Naive thymus-derived CD4-positive, alpha-beta T cell (primary cell): ENCODE measurements at regions of chr6 and their contacts with region 1.

Region 1: GRCh38 chr6:135002229-135002844 is 52.3 kb downstream of the HBS1L start:
- DNase-seq: peak in 4 of 9 donors; percentile 18 to 28 (median 24)
- ATAC-seq: peak; percentile 54
- H3K4me3 ChIP-seq: no peak overlapping the region
- H3K4me3 Mint-ChIP-seq: no peak overlapping the region
- H3K27ac ChIP-seq: no peak overlapping the region
- H3K27ac Mint-ChIP-seq: no peak overlapping the region
- H3K4me1 ChIP-seq: peaks cover 0 to 8% of the 10 kb centered on the region in 2 donors
- H3K4me1 Mint-ChIP-seq: peaks cover under 1 to 19% (median 15%) of the 10 kb centered on the region in 7 donors
- H3K27me3 ChIP-seq: no peaks in the 10 kb centered on the region
- H3K27me3 Mint-ChIP-seq: no peaks in the 10 kb centered on the region

Region 2: GRCh38 chr6:134196568-134197193 is 805.7 kb before region 1 on chr6:
- CTCF ChIA-PET with region 1: no interaction called
- POLR2A ChIA-PET with region 1: no interaction called
- intact Hi-C with region 1: no loop called
- DNase-seq: no peak
- ATAC-seq: peak; percentile 53
- H3K4me3 ChIP-seq: no peak overlapping the region
- H3K4me3 Mint-ChIP-seq: no peak overlapping the region
- H3K27ac ChIP-seq: no peak overlapping the region
- H3K27ac Mint-ChIP-seq: peak overlapping the region in 2 of 9 donors; percentile 34 to 74
- H3K4me1 ChIP-seq: no peaks in the 10 kb centered on the region
- H3K4me1 Mint-ChIP-seq: peaks cover 6 to 37% (median 11%) of the 10 kb centered on the region in 7 donors
- H3K27me3 ChIP-seq: no peaks in the 10 kb centered on the region
- H3K27me3 Mint-ChIP-seq: no peaks in the 10 kb centered on the region

Region 3: GRCh38 chr6:134984821-134985220 is 17.5 kb before region 1 on chr6:
- CTCF ChIA-PET with region 1: interaction called, 4 read pairs
- POLR2A ChIA-PET with region 1: no interaction called
- intact Hi-C with region 1: loop called in 1 of 2 experiments (anchors 2 kb)
- DNase-seq: no peak
- ATAC-seq: no peak
- H3K4me3 ChIP-seq: no peak overlapping the region
- H3K4me3 Mint-ChIP-seq: no peak overlapping the region
- H3K27ac ChIP-seq: no peak overlapping the region
- H3K27ac Mint-ChIP-seq: peak overlapping the region in 2 of 9 donors; percentile 7 to 14
- H3K4me1 ChIP-seq: no peaks in the 10 kb centered on the region
- H3K4me1 Mint-ChIP-seq: peaks cover 3 to 41% (median 13%) of the 10 kb centered on the region in 7 donors
- H3K27me3 ChIP-seq: no peaks in the 10 kb centered on the region
- H3K27me3 Mint-ChIP-seq: no peaks in the 10 kb centered on the region

Region 4: GRCh38 chr6:135014353-135014832 is 12.1 kb after region 1 on chr6:
- CTCF ChIA-PET with region 1: interaction called, 3 read pairs
- POLR2A ChIA-PET with region 1: interaction called, 3 read pairs
- intact Hi-C with region 1: loop called in 1 of 2 experiments (anchors 1 kb)
- DNase-seq: peak in 7 of 9 donors; percentile 25 to 66 (median 52)
- ATAC-seq: peak; percentile 89
- H3K4me3 ChIP-seq: peak overlapping the region; percentile 8
- H3K4me3 Mint-ChIP-seq: peak overlapping the region; percentile 3 to 83 (median 71)
- H3K27ac ChIP-seq: peak overlapping the region; percentile 62
- H3K27ac Mint-ChIP-seq: peak overlapping the region; percentile 76 to 94 (median 85)
- H3K4me1 ChIP-seq: peaks cover 18 to 51% of the 10 kb centered on the region in 2 donors
- H3K4me1 Mint-ChIP-seq: peaks cover 43 to 85% (median 81%) of the 10 kb centered on the region in 7 donors
- H3K27me3 ChIP-seq: no peaks in the 10 kb centered on the region
- H3K27me3 Mint-ChIP-seq: no peaks in the 10 kb centered on the region